ENCODE measurements at regions of chr2 and their contacts with region 1.

Region 1: DNA sequence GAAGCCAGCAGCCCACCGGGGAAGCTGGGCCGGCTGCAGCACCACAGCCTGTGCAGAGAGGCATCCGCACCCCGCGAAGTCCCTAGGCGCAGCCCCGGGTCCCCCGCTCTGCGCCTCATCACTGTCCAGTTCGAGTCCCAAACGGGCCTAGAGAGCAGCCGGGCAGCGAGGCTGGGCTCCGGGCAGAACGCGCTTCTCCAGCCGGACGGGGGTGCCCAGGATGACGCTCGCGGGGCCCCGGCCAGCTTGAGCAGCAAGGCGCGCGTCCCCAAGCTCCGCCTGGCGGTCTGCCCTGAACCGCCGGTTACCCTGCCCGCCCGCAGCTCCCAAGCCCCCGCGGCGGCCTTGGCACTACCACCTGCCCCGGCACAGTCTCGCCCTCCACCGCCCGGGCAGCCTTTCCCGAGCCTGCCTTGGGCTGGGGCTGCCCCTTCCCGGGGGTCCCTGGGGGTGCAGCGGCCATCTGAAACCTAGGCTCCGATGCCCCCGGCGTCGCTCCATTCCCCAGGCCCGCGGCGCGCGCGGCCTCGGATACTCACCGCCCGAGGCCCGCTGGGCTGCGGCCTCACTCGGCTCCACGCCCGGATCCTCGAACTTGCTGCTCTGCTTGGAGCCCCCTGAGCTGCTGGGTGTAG is 591 bp downstream of the SLC16A14 start:
- DNase-seq: peak; percentile 53
- CTCF ChIP-seq: peak; percentile 29

Region 2: GRCh38 chr2:230053753-230054478 is 14.2 kb before region 1 on chr2:
- CTCF ChIA-PET with region 1: interaction called, 103 read pairs
- POLR2A ChIA-PET with region 1: no interaction called
- DNase-seq: no peak
- CTCF ChIP-seq: no peak

Region 3: DNA sequence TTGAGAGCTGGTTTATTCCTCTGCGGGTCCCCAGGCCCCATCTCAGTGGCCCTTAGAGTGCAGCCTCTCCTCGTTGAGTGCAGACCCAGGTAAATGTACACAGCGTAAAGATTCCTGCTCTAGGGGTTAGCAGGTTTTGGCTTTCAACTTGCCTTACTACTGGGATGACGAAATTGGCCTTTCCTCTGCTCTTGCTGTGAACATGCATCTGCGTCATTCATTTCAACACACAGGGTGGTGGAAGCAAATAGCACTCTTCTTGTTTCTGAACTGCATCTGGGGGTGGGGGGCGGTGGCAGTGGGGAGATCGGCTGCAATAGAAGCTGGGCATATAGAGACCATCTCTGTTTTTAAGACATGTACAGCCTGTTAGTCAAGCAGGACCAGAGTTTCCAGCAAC is 17.1 kb after region 1 on chr2:
- CTCF ChIA-PET with region 1: interaction called, 27 read pairs
- POLR2A ChIA-PET with region 1: no interaction called
- DNase-seq: no peak
- CTCF ChIP-seq: no peak

Region 4: DNA sequence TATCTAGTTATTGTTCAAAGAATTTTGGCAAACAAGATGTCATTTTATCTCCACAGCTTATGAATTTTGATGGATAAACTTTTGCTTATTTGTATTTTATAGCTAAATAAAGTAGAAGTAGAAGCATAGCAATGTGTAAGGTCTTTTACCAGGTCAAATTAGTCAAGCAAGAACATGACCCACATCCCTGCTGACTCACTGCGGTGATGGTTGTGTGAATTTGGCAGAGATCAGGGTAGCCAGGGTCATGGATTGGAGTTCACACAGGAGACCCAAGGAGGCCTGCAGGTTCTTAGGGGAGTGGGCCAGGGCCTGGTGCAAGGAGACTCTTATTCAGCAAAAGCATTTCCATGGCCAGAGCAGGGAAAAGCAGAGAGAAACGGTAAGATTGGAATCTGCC is 176.1 kb after region 1 on chr2:
- CTCF ChIA-PET with region 1: no interaction called
- POLR2A ChIA-PET with region 1: no interaction called
- DNase-seq: no peak
- CTCF ChIP-seq: no peak

Measured in GM10248 (cell line).